ENCODE measurements at regions of chr12 and their contacts with region 1.

Region 1: GRCh38 chr12:76790564-76791552 is 26.9 kb downstream of the ZDHHC17 start:
- DNase-seq: no peak
- H3K4me3 ChIP-seq: no peak overlapping the region
- H3K27ac ChIP-seq: no peak overlapping the region
- H3K4me1 ChIP-seq: peaks cover 0 to 2% (median 0%) of the 10 kb centered on the region in 4 experiments; a peak in 1 of 7 replicates
- H3K27me3 ChIP-seq: no peaks in the 10 kb centered on the region
- CTCF ChIP-seq: peak in 2 of 3 experiments; percentile 16 to 45; a peak in 2 of 4 replicates
- EP300 ChIP-seq: no peak
- POLR2A ChIP-seq: no peak
- RAD21 ChIP-seq: peak; percentile 67 to 81

Region 2: GRCh38 chr12:76621582-76622024 is 169.3 kb before region 1 on chr12:
- CTCF ChIA-PET with region 1: interaction called, 69 read pairs
- POLR2A ChIA-PET with region 1: no interaction called
- DNase-seq: peak; percentile 17 to 77
- H3K4me3 ChIP-seq: no peak overlapping the region
- H3K27ac ChIP-seq: no peak overlapping the region
- H3K4me1 ChIP-seq: no peaks in the 10 kb centered on the region; a peak in 1 of 7 replicates
- H3K27me3 ChIP-seq: no peaks in the 10 kb centered on the region
- CTCF ChIP-seq: peak in 2 of 3 experiments; percentile 86 to 89; a peak in 3 of 4 replicates
- EP300 ChIP-seq: no peak
- POLR2A ChIP-seq: no peak
- RAD21 ChIP-seq: peak; percentile 99

Region 3: DNA sequence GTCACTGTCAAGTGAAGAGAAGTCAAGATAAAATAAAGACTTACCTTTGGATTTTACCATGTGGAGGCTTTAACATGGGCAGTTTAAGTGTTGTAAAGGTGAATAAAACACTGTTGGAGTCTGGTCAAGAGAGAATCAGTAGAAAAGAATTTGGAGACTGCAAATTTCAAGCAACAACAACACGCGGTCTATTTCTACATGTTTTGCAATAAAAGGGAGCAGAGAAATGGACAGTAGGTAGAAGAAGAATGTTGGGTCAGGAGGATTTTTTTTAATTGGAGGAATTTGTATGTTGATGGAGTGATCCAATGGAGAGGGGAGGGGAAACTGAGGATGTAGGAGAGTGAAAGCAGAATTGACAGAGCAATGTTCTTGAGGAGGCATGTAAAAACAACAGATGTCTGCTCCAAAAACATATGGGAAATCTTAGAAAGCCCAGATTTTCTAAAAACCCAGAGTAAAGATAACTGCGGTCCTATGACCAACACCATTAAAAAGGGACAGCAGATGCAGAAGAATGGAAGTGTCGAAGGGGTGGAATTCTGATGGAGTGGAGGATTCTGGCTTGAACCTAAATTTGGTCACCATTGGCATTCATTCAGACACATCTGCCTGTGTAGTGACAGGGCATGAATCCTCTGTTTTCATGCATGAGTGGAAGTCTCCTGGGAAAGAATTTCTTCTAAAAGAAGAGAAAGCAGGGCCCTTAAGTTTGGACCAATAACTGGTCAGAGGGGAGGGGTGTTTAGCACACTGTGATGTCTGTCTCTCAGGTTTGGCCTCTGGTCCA is 163.3 kb before region 1 on chr12:
- CTCF ChIA-PET with region 1: interaction called, 69 read pairs
- POLR2A ChIA-PET with region 1: no interaction called
- DNase-seq: no peak
- H3K4me3 ChIP-seq: no peak overlapping the region
- H3K27ac ChIP-seq: no peak overlapping the region
- H3K4me1 ChIP-seq: no peaks in the 10 kb centered on the region; a peak in 1 of 7 replicates
- H3K27me3 ChIP-seq: no peaks in the 10 kb centered on the region
- CTCF ChIP-seq: no peak
- EP300 ChIP-seq: no peak
- POLR2A ChIP-seq: no peak
- RAD21 ChIP-seq: no peak

Region 4: GRCh38 chr12:76636121-76636692 is 154.7 kb before region 1 on chr12:
- CTCF ChIA-PET with region 1: interaction called, 16 read pairs
- POLR2A ChIA-PET with region 1: no interaction called
- DNase-seq: no peak
- H3K4me3 ChIP-seq: no peak overlapping the region
- H3K27ac ChIP-seq: no peak overlapping the region
- H3K4me1 ChIP-seq: peaks cover 2 to 10% (median 8%) of the 10 kb centered on the region in 4 experiments; a peak in 6 of 7 replicates
- H3K27me3 ChIP-seq: no peaks in the 10 kb centered on the region
- CTCF ChIP-seq: no peak
- EP300 ChIP-seq: no peak
- POLR2A ChIP-seq: no peak
- RAD21 ChIP-seq: no peak

Region 5: DNA sequence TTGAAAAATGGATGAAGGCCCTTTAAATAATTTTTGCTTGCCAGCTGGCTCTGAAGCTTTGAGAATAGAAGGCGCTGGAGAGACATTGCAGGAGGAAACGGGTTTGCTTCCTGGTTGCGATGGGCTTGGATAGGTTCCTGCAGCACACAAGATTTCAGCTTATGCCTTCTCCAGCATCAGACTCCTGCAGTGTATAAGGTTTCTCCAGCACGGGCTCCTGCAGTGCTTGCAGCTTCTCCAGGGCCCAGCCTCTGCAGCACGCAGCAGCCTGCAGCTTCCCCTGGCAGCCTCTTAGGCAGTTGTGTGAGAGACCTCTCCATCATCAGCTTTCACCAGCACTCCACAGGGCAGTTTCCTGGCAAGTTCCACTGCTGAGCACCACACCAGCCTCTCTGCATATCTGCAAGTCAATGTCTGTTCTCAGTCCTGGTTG is 105.6 kb before region 1 on chr12:
- CTCF ChIA-PET with region 1: interaction called, 40 read pairs
- POLR2A ChIA-PET with region 1: no interaction called
- DNase-seq: no peak
- H3K4me3 ChIP-seq: no peak overlapping the region
- H3K27ac ChIP-seq: no peak overlapping the region
- H3K4me1 ChIP-seq: no peaks in the 10 kb centered on the region; a peak in 3 of 7 replicates
- H3K27me3 ChIP-seq: no peaks in the 10 kb centered on the region
- CTCF ChIP-seq: no peak
- EP300 ChIP-seq: no peak
- POLR2A ChIP-seq: no peak
- RAD21 ChIP-seq: no peak

Region 6: GRCh38 chr12:76697849-76698248 is 93.0 kb before region 1 on chr12:
- CTCF ChIA-PET with region 1: interaction called, 10 read pairs
- POLR2A ChIA-PET with region 1: no interaction called
- DNase-seq: no peak
- H3K4me3 ChIP-seq: no peak overlapping the region
- H3K27ac ChIP-seq: no peak overlapping the region
- H3K4me1 ChIP-seq: peaks cover 5 to 12% (median 6%) of the 10 kb centered on the region in 4 experiments; a peak in 6 of 7 replicates
- H3K27me3 ChIP-seq: no peaks in the 10 kb centered on the region
- CTCF ChIP-seq: no peak
- EP300 ChIP-seq: no peak
- POLR2A ChIP-seq: no peak
- RAD21 ChIP-seq: no peak; a peak in 1 of 4 replicates

Region 7: DNA sequence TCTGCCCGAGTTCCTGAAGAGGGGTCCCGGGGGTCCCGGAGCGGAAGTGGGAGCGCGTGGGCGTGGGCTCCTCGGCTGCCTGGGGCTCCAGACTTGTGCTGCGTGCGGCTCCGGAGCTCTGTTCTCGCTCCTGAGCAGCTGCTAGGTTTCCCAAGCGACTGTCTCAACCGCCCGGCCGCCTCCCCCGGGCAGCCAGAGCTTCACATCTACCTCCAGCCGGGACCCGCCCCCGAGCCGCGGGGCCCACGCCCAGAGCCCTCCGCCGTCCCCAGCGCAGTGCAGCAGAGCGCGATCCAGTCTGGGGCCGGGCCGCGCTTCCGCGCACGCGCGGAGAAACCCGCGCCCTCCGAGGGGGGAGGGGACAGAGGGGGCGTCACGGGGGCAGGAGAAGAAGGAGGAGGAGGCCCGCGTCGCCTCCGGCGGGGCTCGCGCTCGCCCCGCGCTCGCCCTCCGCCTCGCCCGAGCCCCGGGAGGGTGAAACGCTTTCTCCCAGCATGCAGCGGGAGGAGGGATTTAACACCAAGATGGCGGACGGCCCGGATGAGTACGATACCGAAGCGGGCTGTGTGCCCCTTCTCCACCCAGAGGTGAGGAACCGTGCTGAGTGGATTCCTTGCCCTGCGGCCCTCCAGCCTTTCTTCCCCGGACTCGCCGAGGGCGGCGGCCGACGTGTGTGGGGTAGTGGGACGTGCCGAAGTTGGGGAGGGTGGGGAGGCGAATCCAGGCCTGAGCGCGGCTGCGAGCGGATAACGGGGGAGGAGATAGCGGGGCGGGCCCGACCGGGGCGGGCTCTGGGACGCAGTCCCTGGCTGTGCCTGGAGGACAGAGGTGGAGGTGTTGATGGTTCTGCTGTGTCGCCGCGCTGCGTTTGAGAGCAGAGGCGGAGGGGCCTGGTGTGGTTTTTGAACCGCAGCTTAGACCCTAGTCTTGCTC is 26.8 kb before region 1 on chr12 and contains the start of gene ZDHHC17:
- CTCF ChIA-PET with region 1: interaction called, 41 read pairs
- POLR2A ChIA-PET with region 1: interaction called, 5 read pairs
- DNase-seq: peak; percentile 77 to 92
- H3K4me3 ChIP-seq: peak within 1 kb of the TSS; percentile 82 to 98 (median 94)
- H3K27ac ChIP-seq: peak within 1 kb of the TSS; percentile 100
- H3K4me1 ChIP-seq: peaks cover 2 to 14% (median 7%) of the 10 kb centered on the region in 4 experiments; a peak in 6 of 7 replicates
- H3K27me3 ChIP-seq: no peaks in the 10 kb centered on the region
- CTCF ChIP-seq: no peak
- EP300 ChIP-seq: no peak
- POLR2A ChIP-seq: peak; percentile 48 to 94
- RAD21 ChIP-seq: peak in 1 of 2 experiments; percentile 1; a peak in 1 of 4 replicates
- total RNA-seq, gene ZDHHC17: 27.6 and 32.1 TPM in 2 replicates

Region 8: GRCh38 chr12:76830436-76830835 is 39.6 kb after region 1 on chr12:
- CTCF ChIA-PET with region 1: no interaction called
- POLR2A ChIA-PET with region 1: no interaction called
- DNase-seq: no peak
- H3K4me3 ChIP-seq: no peak overlapping the region
- H3K27ac ChIP-seq: no peak overlapping the region
- H3K4me1 ChIP-seq: no peaks in the 10 kb centered on the region
- H3K27me3 ChIP-seq: no peaks in the 10 kb centered on the region
- CTCF ChIP-seq: no peak
- EP300 ChIP-seq: no peak
- POLR2A ChIP-seq: no peak
- RAD21 ChIP-seq: no peak